ENCODE measurements at regions of chr15 and their contacts with region 1.

Region 1: GRCh38 chr15:45587095-45587860 is at the start of gene BLOC1S6:
- DNase-seq: peak; percentile 91
- H3K4me3 ChIP-seq: peak within 1 kb of the TSS; percentile 87
- H3K27ac ChIP-seq: peak within 1 kb of the TSS; percentile 100
- H3K4me1 ChIP-seq: peaks cover 16% of the 10 kb centered on the region
- H3K27me3 ChIP-seq: no peaks in the 10 kb centered on the region
- CTCF ChIP-seq: no peak
- total RNA-seq, gene BLOC1S6: 28.3 to 31.9 TPM

Region 2: GRCh38 chr15:45522328-45523160 is 64.7 kb before region 1 on chr15 and contains the start of gene SLC30A4:
- intact Hi-C with region 1: loop called (anchors 10 kb)
- DNase-seq: peak; percentile 65
- H3K4me3 ChIP-seq: peak within 1 kb of the TSS; percentile 66
- H3K27ac ChIP-seq: peak within 1 kb of the TSS; percentile 81
- H3K4me1 ChIP-seq: peaks cover 7% of the 10 kb centered on the region
- H3K27me3 ChIP-seq: no peaks in the 10 kb centered on the region
- CTCF ChIP-seq: peak; percentile 15
- total RNA-seq, gene SLC30A4: 4.5 to 10.7 TPM

Region 3: GRCh38 chr15:45555934-45556608 is 31.2 kb before region 1 on chr15:
- intact Hi-C with region 1: no loop called
- DNase-seq: no peak
- H3K4me3 ChIP-seq: no peak overlapping the region
- H3K27ac ChIP-seq: no peak overlapping the region
- H3K4me1 ChIP-seq: no peaks in the 10 kb centered on the region
- H3K27me3 ChIP-seq: no peaks in the 10 kb centered on the region
- CTCF ChIP-seq: no peak

Measured in colonic mucosa (tissue), 4 donors.